Gastrocnemius medialis (tissue), 4 donors: ENCODE measurements at regions of chrX and their contacts with region 1.

Region 1: GRCh38 chrX:17046478-17047097 is 100.1 kb downstream of the REPS2 start:
- DNase-seq: peak; percentile 29 to 37
- ATAC-seq: peak; percentile 83 to 91
- H3K4me3 ChIP-seq: no peak overlapping the region
- H3K27ac ChIP-seq: no peak overlapping the region
- H3K4me1 ChIP-seq: no peaks in the 10 kb centered on the region
- H3K27me3 ChIP-seq: no peaks in the 10 kb centered on the region
- CTCF ChIP-seq: peak; percentile 40 to 78 (median 64)
- POLR2A ChIP-seq: no peak

Region 2: GRCh38 chrX:16250296-16250695 is 796.3 kb before region 1 on chrX:
- in situ Hi-C with region 1: no loop called
- intact Hi-C with region 1: no loop called
- DNase-seq: no peak
- ATAC-seq: no peak
- H3K4me3 ChIP-seq: no peak overlapping the region
- H3K27ac ChIP-seq: no peak overlapping the region
- H3K4me1 ChIP-seq: no peaks in the 10 kb centered on the region
- H3K27me3 ChIP-seq: no peaks in the 10 kb centered on the region
- CTCF ChIP-seq: no peak
- POLR2A ChIP-seq: no peak

Region 3: GRCh38 chrX:16826207-16826606 is 220.4 kb before region 1 on chrX:
- in situ Hi-C with region 1: no loop called
- intact Hi-C with region 1: loop called (anchors 5 kb)
- DNase-seq: no peak
- ATAC-seq: peak in 1 of 2 donors; percentile 38
- H3K4me3 ChIP-seq: no peak overlapping the region
- H3K27ac ChIP-seq: peak overlapping the region in 3 of 4 donors; percentile 76 to 78 (median 78)
- H3K4me1 ChIP-seq: peaks cover 13 to 18% of the 10 kb centered on the region in 2 donors
- H3K27me3 ChIP-seq: no peaks in the 10 kb centered on the region
- CTCF ChIP-seq: peak; percentile 30 to 59 (median 56)
- POLR2A ChIP-seq: no peak

Region 4: GRCh38 chrX:16882702-16883486 is 163.7 kb before region 1 on chrX:
- in situ Hi-C with region 1: loop called in 3 of 4 experiments (anchors 10 to 25 kb)
- intact Hi-C with region 1: loop called (anchors 1 kb)
- DNase-seq: peak; percentile 33 to 63
- ATAC-seq: peak; percentile 80 to 85
- H3K4me3 ChIP-seq: peak overlapping the region; percentile 45 to 71 (median 51)
- H3K27ac ChIP-seq: peak overlapping the region; percentile 75 to 81 (median 79)
- H3K4me1 ChIP-seq: peaks cover 4 to 8% of the 10 kb centered on the region in 2 donors
- H3K27me3 ChIP-seq: peaks cover 0 to 23% (median 14%) of the 10 kb centered on the region in 3 donors
- CTCF ChIP-seq: peak; percentile 38 to 66 (median 49)
- POLR2A ChIP-seq: peak in 1 of 2 donors; percentile 25

Region 5: GRCh38 chrX:17007206-17007683 is 39.3 kb before region 1 on chrX:
- in situ Hi-C with region 1: no loop called
- intact Hi-C with region 1: loop called (anchors 1 kb)
- DNase-seq: no peak
- ATAC-seq: peak in 1 of 2 donors; percentile 63
- H3K4me3 ChIP-seq: no peak overlapping the region
- H3K27ac ChIP-seq: peak overlapping the region in 2 of 4 donors; percentile 9 to 33
- H3K4me1 ChIP-seq: no peaks in the 10 kb centered on the region
- H3K27me3 ChIP-seq: no peaks in the 10 kb centered on the region
- CTCF ChIP-seq: peak in 4 of 5 experiments; percentile 10 to 51 (median 46)
- POLR2A ChIP-seq: no peak

Region 6: DNA sequence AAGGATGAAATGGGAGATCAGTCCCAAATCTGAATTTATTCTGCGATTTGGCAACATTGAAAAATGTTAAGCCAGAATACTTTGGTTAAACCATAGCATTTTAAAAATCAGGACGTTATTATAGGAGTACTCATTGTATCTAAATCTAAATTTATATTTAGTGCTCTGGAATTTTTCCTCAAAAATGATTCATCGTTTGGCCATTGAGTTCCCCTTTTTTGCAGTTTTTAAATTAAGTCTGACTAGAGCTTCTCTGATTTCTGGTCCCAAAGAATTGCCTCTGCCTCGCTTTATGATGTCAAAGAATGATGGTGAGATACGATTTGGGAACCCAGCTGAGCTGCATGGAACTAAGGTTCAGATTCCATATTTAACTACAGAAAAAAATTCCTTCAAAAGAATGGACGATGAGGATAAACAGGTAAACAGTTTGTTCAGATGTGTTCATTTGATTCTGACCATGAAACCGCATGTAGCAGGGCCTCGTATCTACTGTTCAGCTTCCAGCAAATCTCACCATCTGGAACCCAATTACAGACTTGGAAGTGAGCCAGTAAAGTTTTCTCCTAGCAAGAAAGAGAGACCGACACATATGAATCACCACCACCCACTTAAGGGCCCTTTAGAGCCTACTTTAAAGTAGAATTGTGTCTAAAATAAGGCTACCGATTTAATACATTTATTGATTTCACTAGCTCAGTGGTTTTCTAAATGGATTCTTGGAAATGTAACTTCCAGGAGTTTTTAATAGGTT is 24.6 kb before region 1 on chrX:
- in situ Hi-C with region 1: no loop called
- intact Hi-C with region 1: no loop called
- DNase-seq: no peak
- ATAC-seq: no peak
- H3K4me3 ChIP-seq: no peak overlapping the region
- H3K27ac ChIP-seq: no peak overlapping the region
- H3K4me1 ChIP-seq: no peaks in the 10 kb centered on the region
- H3K27me3 ChIP-seq: peaks cover 0 to 4% (median 0%) of the 10 kb centered on the region in 3 donors
- CTCF ChIP-seq: no peak
- POLR2A ChIP-seq: no peak